ENCODE measurements at regions of chr6 and their contacts with region 1.

Region 1: DNA sequence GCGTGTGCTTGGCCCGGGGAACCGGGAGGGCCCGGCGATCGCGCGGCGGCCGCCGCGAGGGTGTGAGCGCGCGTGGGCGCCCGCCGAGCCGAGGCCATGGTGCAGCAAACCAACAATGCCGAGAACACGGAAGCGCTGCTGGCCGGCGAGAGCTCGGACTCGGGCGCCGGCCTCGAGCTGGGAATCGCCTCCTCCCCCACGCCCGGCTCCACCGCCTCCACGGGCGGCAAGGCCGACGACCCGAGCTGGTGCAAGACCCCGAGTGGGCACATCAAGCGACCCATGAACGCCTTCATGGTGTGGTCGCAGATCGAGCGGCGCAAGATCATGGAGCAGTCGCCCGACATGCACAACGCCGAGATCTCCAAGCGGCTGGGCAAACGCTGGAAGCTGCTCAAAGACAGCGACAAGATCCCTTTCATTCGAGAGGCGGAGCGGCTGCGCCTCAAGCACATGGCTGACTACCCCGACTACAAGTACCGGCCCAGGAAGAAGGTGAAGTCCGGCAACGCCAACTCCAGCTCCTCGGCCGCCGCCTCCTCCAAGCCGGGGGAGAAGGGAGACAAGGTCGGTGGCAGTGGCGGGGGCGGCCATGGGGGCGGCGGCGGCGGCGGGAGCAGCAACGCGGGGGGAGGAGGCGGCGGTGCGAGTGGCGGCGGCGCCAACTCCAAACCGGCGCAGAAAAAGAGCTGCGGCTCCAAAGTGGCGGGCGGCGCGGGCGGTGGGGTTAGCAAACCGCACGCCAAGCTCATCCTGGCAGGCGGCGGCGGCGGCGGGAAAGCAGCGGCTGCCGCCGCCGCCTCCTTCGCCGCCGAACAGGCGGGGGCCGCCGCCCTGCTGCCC is 1.1 kb downstream of the SOX4 start:
- DNase-seq: peak; percentile 54 to 91 (median 57)
- H3K4me3 ChIP-seq: peak overlapping the region; percentile 86 to 99 (median 88)
- H3K27ac ChIP-seq: peak overlapping the region; percentile 90 to 96
- H3K4me1 ChIP-seq: peaks cover 0 to 7% (median 3%) of the 10 kb centered on the region in 3 donors
- H3K27me3 ChIP-seq: no peaks in the 10 kb centered on the region
- CTCF ChIP-seq: no peak

Region 2: GRCh38 chr6:22008248-22008836 is 413.7 kb after region 1 on chr6:
- intact Hi-C with region 1: no loop called
- DNase-seq: peak in 1 of 5 donors; percentile 32
- H3K4me3 ChIP-seq: no peak overlapping the region
- H3K27ac ChIP-seq: no peak overlapping the region
- H3K4me1 ChIP-seq: no peaks in the 10 kb centered on the region
- H3K27me3 ChIP-seq: no peaks in the 10 kb centered on the region
- CTCF ChIP-seq: no peak

Region 3: GRCh38 chr6:22045261-22045912 is 450.7 kb after region 1 on chr6:
- intact Hi-C with region 1: loop called (anchors 5 kb)
- DNase-seq: no peak
- H3K4me3 ChIP-seq: no peak overlapping the region
- H3K27ac ChIP-seq: no peak overlapping the region
- H3K4me1 ChIP-seq: peaks cover 0 to 13% (median 9%) of the 10 kb centered on the region in 3 donors
- H3K27me3 ChIP-seq: no peaks in the 10 kb centered on the region
- CTCF ChIP-seq: no peak

Measured in kidney (tissue), 22 donors.